ENCODE measurements at regions of chr12 and their contacts with region 1.

Region 1: DNA sequence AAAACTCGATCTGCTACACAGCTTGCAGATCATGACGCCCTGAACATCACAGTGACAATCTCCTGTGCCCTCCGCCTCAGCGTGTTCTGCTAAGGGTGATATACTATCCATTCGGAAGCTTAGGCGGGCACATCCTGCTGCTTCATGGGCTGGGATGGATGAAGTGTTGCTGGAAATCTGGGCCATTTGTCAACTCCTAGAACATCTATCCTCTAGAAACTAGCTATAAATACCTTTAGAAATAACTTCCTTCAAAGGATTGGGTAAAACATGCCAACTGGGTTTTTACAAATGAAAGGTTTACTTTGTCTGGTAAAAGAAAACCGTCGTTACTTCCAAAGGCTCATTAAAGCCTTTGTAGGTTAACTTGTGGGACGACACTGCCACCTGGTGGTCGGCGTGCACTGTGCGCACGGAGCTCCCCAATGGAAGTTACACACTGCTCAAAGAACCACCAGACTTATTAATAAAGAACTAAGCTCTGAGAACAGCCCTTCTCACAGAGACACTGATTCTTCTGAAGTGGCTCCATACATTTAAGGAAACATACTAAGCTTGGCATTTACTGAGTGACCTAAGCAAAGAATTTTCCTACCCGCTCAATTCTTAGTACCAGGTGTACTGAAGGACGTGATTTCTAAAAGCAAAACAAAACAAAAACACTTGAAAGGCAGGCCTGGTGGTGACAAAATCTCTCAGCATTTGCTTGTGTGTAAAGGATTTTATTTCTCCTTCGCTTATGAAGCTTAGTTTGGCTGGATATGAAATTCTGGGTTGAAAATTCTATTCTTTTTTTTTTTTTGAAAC is 21.6 kb upstream of the CACNA2D4 start:
- DNase-seq: peak; percentile 64
- H3K27ac ChIP-seq: no peak overlapping the region
- CTCF ChIP-seq: peak; percentile 81

Region 2: DNA sequence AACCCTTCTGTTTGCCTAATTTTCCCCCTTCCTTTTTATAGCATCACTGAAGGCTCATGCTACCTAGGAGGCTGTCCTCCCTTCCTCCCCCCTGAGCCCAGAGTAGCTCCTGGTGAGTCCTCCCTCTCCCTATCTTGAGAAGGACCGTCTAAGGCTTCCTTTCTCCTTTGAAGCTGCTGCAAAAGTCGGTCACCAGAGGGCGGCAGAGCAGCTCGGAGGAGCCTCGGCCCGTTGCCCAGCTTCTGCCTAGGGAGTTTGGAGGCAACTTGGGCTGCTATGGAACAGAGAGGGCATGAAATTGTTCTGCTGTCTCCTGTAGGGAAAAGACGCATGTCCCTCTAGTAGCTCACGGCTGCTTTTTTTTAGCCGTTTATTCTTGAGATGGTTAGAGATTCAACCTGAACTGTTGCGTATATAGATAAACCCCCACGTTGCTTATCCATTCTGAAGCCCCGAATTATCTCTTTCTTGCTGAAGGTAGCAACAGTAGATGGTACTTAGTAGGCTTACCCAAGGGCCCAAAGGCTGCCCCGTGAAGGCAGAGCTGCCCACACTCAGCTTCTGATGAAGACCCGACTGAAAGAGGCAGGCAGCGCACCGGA is 305.3 kb before region 1 on chr12:
- CTCF ChIA-PET with region 1: interaction called, 17 read pairs
- POLR2A ChIA-PET with region 1: no interaction called
- DNase-seq: peak; percentile 62
- H3K27ac ChIP-seq: no peak overlapping the region
- CTCF ChIP-seq: peak; percentile 72

Region 3: DNA sequence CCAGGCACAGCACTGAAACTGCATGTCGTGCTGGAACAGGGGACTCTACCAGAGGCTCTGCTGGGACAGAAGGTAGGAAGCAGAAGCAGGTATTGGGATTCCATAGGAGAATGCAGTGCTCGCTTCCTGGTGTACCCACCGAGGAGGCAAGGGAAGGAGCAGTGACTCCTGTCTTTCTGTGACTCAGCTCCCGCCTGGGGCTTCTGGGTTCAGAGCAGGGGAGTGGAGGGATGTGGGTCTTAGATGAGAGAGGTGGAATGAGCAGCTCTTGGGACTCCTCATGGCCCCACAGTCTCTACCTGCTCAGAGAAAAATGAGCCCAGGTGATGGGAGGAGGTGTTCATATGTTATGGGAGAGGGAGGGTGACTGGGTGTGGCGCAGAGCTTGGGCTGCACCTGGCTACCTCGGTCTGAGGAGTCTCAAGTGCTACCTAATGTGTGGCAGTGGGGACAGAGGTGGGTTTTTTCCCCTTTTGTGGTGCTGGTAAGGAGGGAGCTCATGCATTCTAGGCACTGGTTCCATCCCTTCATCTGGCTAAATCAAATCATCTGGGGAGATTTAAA is 284.7 kb before region 1 on chr12:
- CTCF ChIA-PET with region 1: interaction called, 10 read pairs
- POLR2A ChIA-PET with region 1: no interaction called
- DNase-seq: no peak
- H3K27ac ChIP-seq: no peak overlapping the region
- CTCF ChIP-seq: no peak